B cell (primary cell): ENCODE measurements at regions of chr20 and their contacts with region 1.

Region 1: GRCh38 chr20:20052074-20052970 is at the starts of genes CFAP61 and CRNKL1:
- DNase-seq: peak; percentile 99
- ATAC-seq: peak; percentile 93
- H3K4me3 ChIP-seq: peak within 1 kb of the TSS; percentile 85 to 98 (median 97)
- H3K4me3 Mint-ChIP-seq: peak within 1 kb of the TSS; percentile 99
- H3K27ac ChIP-seq: peak within 1 kb of the TSS; percentile 78 to 91
- H3K27ac Mint-ChIP-seq: peak within 1 kb of the TSS; percentile 97
- H3K4me1 ChIP-seq: peaks cover 7 to 14% of the 10 kb centered on the region in 2 donors
- H3K4me1 Mint-ChIP-seq: peaks cover 23% of the 10 kb centered on the region
- H3K27me3 ChIP-seq: peaks cover 0 to 9% (median 5%) of the 10 kb centered on the region in 4 experiments
- H3K27me3 Mint-ChIP-seq: peaks cover 7% of the 10 kb centered on the region
- CTCF ChIP-seq: no peak
- total RNA-seq, gene CFAP61: not detected in 2 replicates
- total RNA-seq, gene CRNKL1: 25.5 and 32.1 TPM in 2 replicates

Region 2: GRCh38 chr20:18984238-18985200 is 1067.8 kb before region 1 on chr20:
- CTCF ChIA-PET with region 1: no interaction called
- POLR2A ChIA-PET with region 1: no interaction called
- intact Hi-C with region 1: no loop called
- DNase-seq: no peak
- ATAC-seq: no peak
- H3K4me3 ChIP-seq: no peak overlapping the region
- H3K4me3 Mint-ChIP-seq: no peak overlapping the region
- H3K27ac ChIP-seq: no peak overlapping the region
- H3K27ac Mint-ChIP-seq: no peak overlapping the region
- H3K4me1 ChIP-seq: no peaks in the 10 kb centered on the region
- H3K4me1 Mint-ChIP-seq: no peaks in the 10 kb centered on the region
- H3K27me3 ChIP-seq: no peaks in the 10 kb centered on the region
- H3K27me3 Mint-ChIP-seq: no peaks in the 10 kb centered on the region
- CTCF ChIP-seq: no peak

Region 3: GRCh38 chr20:19964289-19965263 is 87.7 kb before region 1 on chr20:
- CTCF ChIA-PET with region 1: no interaction called
- POLR2A ChIA-PET with region 1: no interaction called
- intact Hi-C with region 1: no loop called
- DNase-seq: no peak
- ATAC-seq: no peak
- H3K4me3 ChIP-seq: no peak overlapping the region
- H3K4me3 Mint-ChIP-seq: no peak overlapping the region
- H3K27ac ChIP-seq: no peak overlapping the region
- H3K27ac Mint-ChIP-seq: no peak overlapping the region
- H3K4me1 ChIP-seq: peaks cover 0 to 7% of the 10 kb centered on the region in 2 donors
- H3K4me1 Mint-ChIP-seq: peaks cover 9% of the 10 kb centered on the region
- H3K27me3 ChIP-seq: no peaks in the 10 kb centered on the region
- H3K27me3 Mint-ChIP-seq: no peaks in the 10 kb centered on the region
- CTCF ChIP-seq: no peak

Region 4: GRCh38 chr20:20017001-20017843 is 35.1 kb before region 1 on chr20 and contains the start of gene NAA20:
- CTCF ChIA-PET with region 1: interaction called, 12 read pairs
- POLR2A ChIA-PET with region 1: interaction called, 12 read pairs
- intact Hi-C with region 1: loop called (anchors 1 kb)
- DNase-seq: peak; percentile 91
- ATAC-seq: peak; percentile 98
- H3K4me3 ChIP-seq: peak within 1 kb of the TSS; percentile 41 to 91 (median 83)
- H3K4me3 Mint-ChIP-seq: peak within 1 kb of the TSS; percentile 94
- H3K27ac ChIP-seq: peak within 1 kb of the TSS; percentile 1 to 86
- H3K27ac Mint-ChIP-seq: peak within 1 kb of the TSS; percentile 94
- H3K4me1 ChIP-seq: peaks cover 12 to 27% of the 10 kb centered on the region in 2 donors
- H3K4me1 Mint-ChIP-seq: peaks cover 42% of the 10 kb centered on the region
- H3K27me3 ChIP-seq: no peaks in the 10 kb centered on the region
- H3K27me3 Mint-ChIP-seq: no peaks in the 10 kb centered on the region
- CTCF ChIP-seq: peak; percentile 73
- total RNA-seq, gene NAA20: 25.5 and 27.1 TPM in 2 replicates